Vagina (tissue), 2 donors: ENCODE measurements at regions of chr6 and their contacts with region 1.

Region 1: DNA sequence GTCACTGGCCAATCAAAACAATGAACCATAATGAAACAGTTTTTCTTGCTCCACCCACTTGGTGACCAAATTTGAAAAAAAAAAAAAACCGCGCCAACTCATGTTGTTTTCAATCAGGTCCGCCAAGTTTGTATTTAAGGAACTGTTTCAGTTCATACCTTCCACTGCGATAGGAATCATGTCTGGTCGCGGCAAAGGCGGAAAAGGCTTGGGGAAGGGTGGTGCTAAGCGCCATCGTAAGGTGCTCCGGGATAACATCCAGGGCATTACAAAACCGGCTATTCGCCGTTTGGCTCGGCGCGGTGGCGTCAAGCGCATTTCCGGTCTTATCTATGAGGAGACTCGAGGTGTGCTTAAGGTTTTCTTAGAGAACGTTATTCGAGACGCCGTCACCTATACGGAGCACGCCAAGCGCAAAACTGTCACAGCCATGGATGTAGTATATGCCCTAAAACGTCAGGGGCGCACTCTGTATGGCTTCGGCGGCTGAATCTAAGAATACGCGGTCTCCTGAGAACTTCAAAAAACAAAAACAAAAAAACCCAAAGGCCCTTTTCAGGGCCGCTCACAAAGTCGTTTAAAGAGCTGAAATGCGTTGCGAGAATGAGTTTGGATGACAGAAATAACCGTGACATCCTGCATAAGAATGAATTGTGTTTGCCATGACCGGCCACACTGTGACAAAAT is 16.7 kb downstream of the HFE start:
- DNase-seq: peak in 1 of 2 donors; percentile 98
- H3K4me3 ChIP-seq: peak overlapping the region; percentile 44 to 51
- H3K27ac ChIP-seq: peak overlapping the region; percentile 73
- H3K4me1 ChIP-seq: peaks cover 12% of the 10 kb centered on the region
- H3K27me3 ChIP-seq: no peaks in the 10 kb centered on the region
- CTCF ChIP-seq: peak in 1 of 3 experiments; percentile 43
- POLR2A ChIP-seq: peak in 1 of 2 donors; percentile 96

Region 2: DNA sequence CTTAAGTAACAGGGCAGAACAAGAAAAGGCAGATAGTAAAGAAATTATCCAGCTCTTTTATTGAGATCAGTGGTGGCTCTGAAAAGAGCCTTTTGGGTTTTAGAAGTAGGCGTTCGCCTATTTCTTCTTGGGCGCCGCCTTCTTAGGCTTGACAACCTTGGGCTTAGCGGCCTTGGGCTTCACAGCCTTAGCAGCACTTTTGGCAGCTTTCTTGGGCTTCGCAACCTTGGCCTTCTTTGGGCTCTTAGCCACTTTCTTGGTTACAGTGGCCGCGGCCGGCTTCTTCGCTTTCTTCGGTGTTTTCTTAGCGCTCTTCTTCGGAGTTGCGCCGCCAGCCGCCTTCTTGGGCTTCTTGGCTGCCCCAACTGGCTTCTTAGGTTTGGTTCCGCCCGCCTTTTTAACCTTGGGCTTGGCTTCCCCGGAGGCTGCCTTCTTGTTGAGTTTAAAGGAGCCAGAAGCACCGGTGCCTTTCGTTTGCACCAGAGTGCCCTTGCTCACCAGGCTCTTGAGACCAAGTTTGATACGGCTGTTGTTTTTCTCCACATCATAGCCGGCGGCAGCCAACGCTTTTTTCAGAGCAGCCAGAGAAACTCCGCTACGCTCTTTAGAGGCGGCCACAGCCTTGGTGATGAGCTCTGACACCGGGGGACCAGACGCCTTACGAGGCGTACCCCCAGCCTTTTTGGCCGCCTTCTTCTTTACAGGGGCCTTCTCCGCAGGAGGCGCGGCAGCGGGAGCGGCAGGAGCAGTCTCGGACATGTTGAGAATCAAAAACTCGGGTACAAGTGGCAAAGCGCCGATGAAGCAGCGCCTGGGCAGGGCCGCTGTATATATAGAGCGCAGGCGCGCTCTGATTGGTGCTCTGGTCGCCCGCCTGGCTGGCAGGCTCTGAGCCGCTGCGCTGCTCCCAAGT is 48.0 kb before region 1 on chr6:
- intact Hi-C with region 1: loop called (anchors 2 kb)
- DNase-seq: peak in 1 of 2 donors; percentile 96
- H3K4me3 ChIP-seq: peak overlapping the region; percentile 63 to 69
- H3K27ac ChIP-seq: peak overlapping the region; percentile 81
- H3K4me1 ChIP-seq: peaks cover 15% of the 10 kb centered on the region
- H3K27me3 ChIP-seq: no peaks in the 10 kb centered on the region
- CTCF ChIP-seq: no peak
- POLR2A ChIP-seq: peak in 1 of 2 donors; percentile 98

Region 3: GRCh38 chr6:26156076-26156849 is 52.4 kb after region 1 on chr6:
- intact Hi-C with region 1: loop called (anchors 10 kb)
- DNase-seq: peak in 1 of 2 donors; percentile 96
- H3K4me3 ChIP-seq: peak overlapping the region; percentile 51 to 72
- H3K27ac ChIP-seq: peak overlapping the region; percentile 88
- H3K4me1 ChIP-seq: peaks cover 28% of the 10 kb centered on the region
- H3K27me3 ChIP-seq: no peaks in the 10 kb centered on the region
- CTCF ChIP-seq: no peak
- POLR2A ChIP-seq: peak in 1 of 2 donors; percentile 100

Region 4: GRCh38 chr6:26640806-26641205 is 536.9 kb after region 1 on chr6:
- intact Hi-C with region 1: no loop called
- DNase-seq: no peak
- H3K4me3 ChIP-seq: no peak overlapping the region
- H3K27ac ChIP-seq: no peak overlapping the region
- H3K4me1 ChIP-seq: no peaks in the 10 kb centered on the region
- H3K27me3 ChIP-seq: no peaks in the 10 kb centered on the region
- CTCF ChIP-seq: no peak
- POLR2A ChIP-seq: no peak

Region 5: GRCh38 chr6:27126815-27127537 is 1023.1 kb after region 1 on chr6:
- intact Hi-C with region 1: loop called (anchors 5 kb)
- DNase-seq: no peak
- H3K4me3 ChIP-seq: peak overlapping the region; percentile 6 to 34
- H3K27ac ChIP-seq: peak overlapping the region; percentile 23
- H3K4me1 ChIP-seq: no peaks in the 10 kb centered on the region
- H3K27me3 ChIP-seq: no peaks in the 10 kb centered on the region
- CTCF ChIP-seq: peak; percentile 65 to 82 (median 73)
- POLR2A ChIP-seq: no peak